ENCODE measurements at regions of chr4 and their contacts with region 1.

Region 1: GRCh38 chr4:80365928-80366327 is 30.4 kb downstream of the CFAP299 start:
- DNase-seq: peak; percentile 48 to 69 (median 63)
- H3K4me3 ChIP-seq: no peak overlapping the region
- H3K4me3 Mint-ChIP-seq: no peak overlapping the region
- H3K27ac ChIP-seq: no peak overlapping the region
- H3K27ac Mint-ChIP-seq: peak overlapping the region in 1 of 7 donors; percentile 31
- H3K4me1 ChIP-seq: peaks cover 4% of the 10 kb centered on the region
- H3K4me1 Mint-ChIP-seq: peaks cover 6 to 8% (median 7%) of the 10 kb centered on the region in 4 donors
- H3K27me3 ChIP-seq: no peaks in the 10 kb centered on the region
- H3K27me3 Mint-ChIP-seq: peaks cover 0 to 2% of the 10 kb centered on the region in 2 donors

Region 2: GRCh38 chr4:79638735-79639134 is 727.2 kb before region 1 on chr4:
- CTCF ChIA-PET with region 1: no interaction called
- POLR2A ChIA-PET with region 1: no interaction called
- intact Hi-C with region 1: no loop called
- DNase-seq: no peak
- H3K4me3 ChIP-seq: no peak overlapping the region
- H3K4me3 Mint-ChIP-seq: no peak overlapping the region
- H3K27ac ChIP-seq: no peak overlapping the region
- H3K27ac Mint-ChIP-seq: no peak overlapping the region
- H3K4me1 ChIP-seq: no peaks in the 10 kb centered on the region
- H3K4me1 Mint-ChIP-seq: no peaks in the 10 kb centered on the region
- H3K27me3 ChIP-seq: no peaks in the 10 kb centered on the region
- H3K27me3 Mint-ChIP-seq: peaks cover 0 to 5% of the 10 kb centered on the region in 2 donors

Region 3: DNA sequence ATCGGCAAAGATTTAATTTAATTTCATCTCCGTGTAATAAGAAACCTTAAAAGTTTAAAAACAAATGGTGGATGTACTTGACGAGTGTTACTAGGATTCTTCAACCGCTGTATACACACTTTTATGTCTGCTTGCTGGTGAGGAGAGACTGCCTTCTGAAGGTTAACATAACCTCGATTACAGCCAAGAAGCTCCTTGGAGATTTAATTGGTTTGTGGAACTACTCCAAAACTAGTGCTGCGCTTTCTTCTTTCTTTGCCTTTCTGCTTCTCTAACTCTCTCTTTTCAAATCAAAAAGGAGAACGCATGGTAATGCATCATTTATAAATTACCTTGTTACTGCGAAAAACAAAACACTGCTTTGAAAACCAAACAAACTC is 401.9 kb before region 1 on chr4:
- CTCF ChIA-PET with region 1: no interaction called
- POLR2A ChIA-PET with region 1: no interaction called
- intact Hi-C with region 1: no loop called
- DNase-seq: no peak
- H3K4me3 ChIP-seq: no peak overlapping the region
- H3K4me3 Mint-ChIP-seq: no peak overlapping the region
- H3K27ac ChIP-seq: no peak overlapping the region
- H3K27ac Mint-ChIP-seq: no peak overlapping the region
- H3K4me1 ChIP-seq: no peaks in the 10 kb centered on the region
- H3K4me1 Mint-ChIP-seq: peaks cover 0 to 3% (median 1%) of the 10 kb centered on the region in 4 donors
- H3K27me3 ChIP-seq: no peaks in the 10 kb centered on the region
- H3K27me3 Mint-ChIP-seq: no peaks in the 10 kb centered on the region

Region 4: DNA sequence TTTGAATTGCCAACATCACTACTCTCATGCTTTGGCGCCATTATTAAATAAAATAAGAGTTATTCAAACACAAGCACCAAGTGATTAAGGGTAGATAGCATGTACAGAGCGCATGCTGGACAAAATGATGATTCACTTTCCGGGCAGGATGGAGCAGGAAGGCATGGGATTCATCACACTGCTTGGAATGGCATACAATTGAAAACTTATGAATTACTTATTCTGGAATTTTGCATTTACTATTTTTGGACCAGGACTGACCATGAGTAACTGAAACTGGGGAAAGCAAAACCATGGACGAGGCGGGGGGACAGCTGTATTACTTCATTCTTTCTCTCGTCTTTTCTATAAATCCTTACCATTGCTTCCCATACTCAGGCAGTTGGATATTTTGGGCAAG is 127.9 kb before region 1 on chr4:
- CTCF ChIA-PET with region 1: no interaction called
- POLR2A ChIA-PET with region 1: no interaction called
- intact Hi-C with region 1: no loop called
- DNase-seq: no peak
- H3K4me3 ChIP-seq: no peak overlapping the region
- H3K4me3 Mint-ChIP-seq: no peak overlapping the region
- H3K27ac ChIP-seq: no peak overlapping the region
- H3K27ac Mint-ChIP-seq: no peak overlapping the region
- H3K4me1 ChIP-seq: no peaks in the 10 kb centered on the region
- H3K4me1 Mint-ChIP-seq: no peaks in the 10 kb centered on the region
- H3K27me3 ChIP-seq: no peaks in the 10 kb centered on the region
- H3K27me3 Mint-ChIP-seq: peaks cover 7 to 13% of the 10 kb centered on the region in 2 donors

Region 5: GRCh38 chr4:80407246-80407645 is 41.3 kb after region 1 on chr4:
- CTCF ChIA-PET with region 1: no interaction called
- POLR2A ChIA-PET with region 1: no interaction called
- intact Hi-C with region 1: no loop called
- DNase-seq: no peak
- H3K4me3 ChIP-seq: no peak overlapping the region
- H3K4me3 Mint-ChIP-seq: no peak overlapping the region
- H3K27ac ChIP-seq: no peak overlapping the region
- H3K27ac Mint-ChIP-seq: no peak overlapping the region
- H3K4me1 ChIP-seq: no peaks in the 10 kb centered on the region
- H3K4me1 Mint-ChIP-seq: no peaks in the 10 kb centered on the region
- H3K27me3 ChIP-seq: no peaks in the 10 kb centered on the region
- H3K27me3 Mint-ChIP-seq: no peaks in the 10 kb centered on the region

Region 6: DNA sequence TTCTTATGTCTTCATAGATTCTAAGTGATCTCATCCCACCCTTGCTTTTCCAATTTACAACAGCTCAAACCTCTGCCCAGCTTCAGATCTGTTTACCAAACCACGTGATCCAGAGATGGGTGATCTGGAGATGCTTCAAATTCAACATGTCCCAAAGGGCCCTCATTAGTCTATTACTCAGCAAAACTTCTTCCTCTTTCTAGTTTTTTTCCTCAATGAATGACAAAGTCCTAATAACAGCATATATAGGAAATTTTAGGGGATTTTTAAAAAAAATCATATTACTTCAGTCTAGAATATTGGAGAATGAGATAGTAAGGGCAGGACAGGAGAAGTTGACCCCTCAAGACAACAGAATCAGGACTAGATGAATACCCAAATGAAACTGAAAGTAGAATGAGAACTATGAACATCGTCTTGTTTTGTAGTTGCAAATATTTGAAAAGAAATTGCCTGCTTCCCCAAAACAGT is 96.7 kb after region 1 on chr4:
- CTCF ChIA-PET with region 1: interaction called, 14 read pairs
- POLR2A ChIA-PET with region 1: no interaction called
- intact Hi-C with region 1: no loop called
- DNase-seq: peak in 4 of 5 donors; percentile 6 to 27 (median 18)
- H3K4me3 ChIP-seq: peak overlapping the region in 1 of 2 donors; percentile 10
- H3K4me3 Mint-ChIP-seq: peak overlapping the region; percentile 76 to 86 (median 81)
- H3K27ac ChIP-seq: no peak overlapping the region
- H3K27ac Mint-ChIP-seq: peak overlapping the region in 6 of 7 donors; percentile 12 to 87 (median 82)
- H3K4me1 ChIP-seq: peaks cover 18% of the 10 kb centered on the region
- H3K4me1 Mint-ChIP-seq: peaks cover 19 to 40% (median 26%) of the 10 kb centered on the region in 4 donors
- H3K27me3 ChIP-seq: no peaks in the 10 kb centered on the region
- H3K27me3 Mint-ChIP-seq: peaks cover 0 to 1% of the 10 kb centered on the region in 2 donors

Region 7: DNA sequence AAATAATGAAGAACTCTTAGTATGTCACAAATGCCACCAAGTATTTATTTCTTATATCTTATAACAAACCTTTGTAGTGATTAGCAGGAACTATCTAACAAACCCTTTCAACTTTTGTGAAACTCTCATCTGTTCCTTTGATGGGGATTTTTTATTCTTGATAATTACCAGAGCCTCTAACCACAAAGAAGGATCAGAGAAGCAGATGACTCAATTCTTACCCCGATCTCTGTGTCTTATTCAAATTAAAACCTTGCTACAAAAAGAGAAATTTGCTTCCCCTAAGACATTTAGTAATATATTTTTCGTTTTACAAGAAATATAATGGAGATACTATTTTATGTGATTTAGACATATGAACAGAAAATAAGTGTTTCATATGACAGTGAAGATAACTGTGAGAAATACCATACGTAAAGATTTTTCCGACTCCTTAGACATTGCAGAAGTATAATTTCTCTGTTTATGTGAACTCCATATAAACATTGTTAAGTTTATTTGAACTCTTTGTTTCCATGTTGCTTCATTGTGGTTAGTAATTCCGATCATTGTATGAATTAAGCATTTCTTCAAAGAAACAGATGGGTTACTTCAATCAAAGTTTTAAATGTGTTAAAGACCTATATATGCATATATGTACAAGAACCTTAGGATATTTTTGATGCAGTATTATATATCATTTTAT is 175.0 kb after region 1 on chr4:
- CTCF ChIA-PET with region 1: no interaction called
- POLR2A ChIA-PET with region 1: no interaction called
- intact Hi-C with region 1: loop called (anchors 10 kb)
- DNase-seq: peak in 4 of 5 donors; percentile 17 to 36 (median 26)
- H3K4me3 ChIP-seq: no peak overlapping the region
- H3K4me3 Mint-ChIP-seq: peak overlapping the region in 6 of 8 donors; percentile 6 to 66 (median 50)
- H3K27ac ChIP-seq: no peak overlapping the region
- H3K27ac Mint-ChIP-seq: no peak overlapping the region
- H3K4me1 ChIP-seq: peaks cover 17% of the 10 kb centered on the region
- H3K4me1 Mint-ChIP-seq: peaks cover 9 to 22% (median 18%) of the 10 kb centered on the region in 4 donors
- H3K27me3 ChIP-seq: no peaks in the 10 kb centered on the region
- H3K27me3 Mint-ChIP-seq: peaks cover 0 to 7% of the 10 kb centered on the region in 2 donors

Region 8: DNA sequence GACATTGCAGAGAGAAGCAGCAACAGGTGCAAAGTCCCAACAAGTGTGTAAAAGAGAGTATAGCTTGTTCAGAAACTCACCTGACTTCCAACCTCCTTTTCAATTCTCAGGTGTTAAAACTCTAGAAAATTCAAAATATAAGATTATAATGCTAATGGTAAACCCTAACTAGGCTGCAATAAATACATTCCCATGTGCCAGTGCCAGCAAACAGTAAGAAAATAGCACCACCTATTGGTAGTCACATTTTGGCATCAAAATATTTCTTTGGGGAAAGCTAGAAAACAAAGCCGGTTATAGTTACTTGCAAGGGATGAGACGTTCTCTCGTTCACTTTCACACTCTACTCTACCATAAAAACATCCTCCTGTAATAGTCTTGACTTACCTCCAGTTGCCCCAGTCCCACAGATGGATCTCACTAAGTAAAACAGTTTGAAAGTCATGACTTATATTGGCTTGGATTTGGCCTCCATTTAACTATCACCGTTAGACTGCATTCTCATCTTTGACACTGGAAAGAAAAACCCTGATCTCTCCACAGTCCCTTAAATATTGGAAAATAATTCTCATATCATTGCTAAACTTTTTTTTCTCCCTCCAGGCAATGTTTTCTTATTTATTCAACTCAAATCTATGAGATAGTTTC is 674.2 kb after region 1 on chr4:
- CTCF ChIA-PET with region 1: interaction called, 150 read pairs
- POLR2A ChIA-PET with region 1: no interaction called
- intact Hi-C with region 1: loop called (anchors 1 kb)
- DNase-seq: peak in 4 of 5 donors; percentile 37 to 46 (median 43)
- H3K4me3 ChIP-seq: no peak overlapping the region
- H3K4me3 Mint-ChIP-seq: no peak overlapping the region
- H3K27ac ChIP-seq: no peak overlapping the region
- H3K27ac Mint-ChIP-seq: no peak overlapping the region
- H3K4me1 ChIP-seq: no peaks in the 10 kb centered on the region
- H3K4me1 Mint-ChIP-seq: no peaks in the 10 kb centered on the region
- H3K27me3 ChIP-seq: no peaks in the 10 kb centered on the region
- H3K27me3 Mint-ChIP-seq: peaks cover 13 to 14% of the 10 kb centered on the region in 2 donors

Region 9: DNA sequence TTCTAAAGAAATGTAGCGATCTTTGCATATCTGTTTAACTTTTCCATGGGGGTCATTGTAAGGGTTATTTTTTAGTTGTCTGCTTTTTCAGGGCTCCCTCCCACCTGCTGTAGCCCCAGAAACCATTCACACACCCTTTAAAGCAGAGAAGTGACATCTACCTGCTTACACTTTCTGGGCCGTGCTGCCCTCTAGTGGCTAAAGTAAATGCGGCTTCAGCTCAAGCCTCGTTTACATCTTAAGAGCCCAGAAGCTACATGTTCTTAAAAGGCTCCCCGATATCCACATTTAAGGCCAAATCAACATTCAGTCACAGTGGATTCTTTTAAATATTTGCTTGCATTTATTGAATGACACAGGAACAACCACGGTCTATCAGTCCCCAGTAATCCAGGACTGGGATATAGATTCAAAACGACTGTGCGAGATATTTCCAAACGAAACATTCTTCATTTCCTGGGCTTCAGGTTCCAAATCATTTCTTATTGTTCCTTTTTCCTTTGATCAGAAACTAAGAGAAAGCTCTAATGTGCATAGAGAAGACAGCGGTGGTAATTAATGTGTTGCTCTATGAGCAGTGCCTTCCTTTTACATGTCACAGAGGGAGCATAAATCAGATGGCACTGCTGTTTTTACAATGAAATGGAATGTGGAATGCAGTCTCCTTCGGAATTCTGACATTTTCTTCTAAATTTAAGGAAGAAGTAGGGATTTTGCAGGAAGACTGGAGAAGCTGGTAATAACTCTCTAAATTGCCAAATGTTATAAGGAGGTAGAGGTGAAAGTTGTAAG is 985.9 kb after region 1 on chr4:
- CTCF ChIA-PET with region 1: interaction called, 15 read pairs
- POLR2A ChIA-PET with region 1: no interaction called
- intact Hi-C with region 1: loop called (anchors 1 kb)
- DNase-seq: peak in 4 of 5 donors; percentile 38 to 55 (median 42)
- H3K4me3 ChIP-seq: no peak overlapping the region
- H3K4me3 Mint-ChIP-seq: no peak overlapping the region
- H3K27ac ChIP-seq: no peak overlapping the region
- H3K27ac Mint-ChIP-seq: no peak overlapping the region
- H3K4me1 ChIP-seq: no peaks in the 10 kb centered on the region
- H3K4me1 Mint-ChIP-seq: peaks cover 0 to 2% (median 0%) of the 10 kb centered on the region in 4 donors
- H3K27me3 ChIP-seq: no peaks in the 10 kb centered on the region
- H3K27me3 Mint-ChIP-seq: peaks cover 6 to 8% of the 10 kb centered on the region in 2 donors